ENCODE measurements at regions of chr14 and their contacts with region 1.

Region 1: DNA sequence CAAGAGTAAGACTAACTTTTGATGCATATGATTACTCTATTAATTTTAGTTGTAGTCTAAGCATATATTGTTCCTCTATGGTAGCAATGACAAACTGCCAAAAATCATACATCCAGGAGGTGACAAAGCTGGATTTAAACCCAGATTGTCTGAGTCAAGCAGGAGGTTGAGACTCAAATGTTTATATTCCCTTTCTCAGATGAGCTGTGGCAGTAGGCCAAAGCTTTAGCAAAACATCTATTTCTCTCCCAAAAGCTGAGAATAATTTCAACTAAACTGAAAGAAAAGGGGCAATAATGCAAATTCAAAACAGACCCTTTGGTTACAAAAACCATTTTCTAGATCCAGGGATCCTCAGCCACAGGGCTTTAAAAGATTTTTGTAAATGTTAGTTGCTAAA is 173.6 kb downstream of the SEC23A start:
- DNase-seq: no peak

Region 2: GRCh38 chr14:38261620-38262019 is 667.8 kb before region 1 on chr14:
- intact Hi-C with region 1: loop called in 1 of 2 experiments (anchors 5 kb)
- DNase-seq: no peak

Measured in posterior vena cava (tissue), 2 donors.